Activated T-helper 1 cell treated with anti-CD3 and anti-CD28 coated beads, Interleukin-12 subunit alpha, Interleukin-12 subunit beta, Interleukin-2, Interleukin-4 antibody, amounts not matched to agents 30 ng/mL and 10 ng/mL and 1 ng/mL, durations not matched to agents 14 hours and 24 hours and 36 hours (primary cell): ENCODE measurements at regions of chr7 and their contacts with region 1.

Region 1: DNA sequence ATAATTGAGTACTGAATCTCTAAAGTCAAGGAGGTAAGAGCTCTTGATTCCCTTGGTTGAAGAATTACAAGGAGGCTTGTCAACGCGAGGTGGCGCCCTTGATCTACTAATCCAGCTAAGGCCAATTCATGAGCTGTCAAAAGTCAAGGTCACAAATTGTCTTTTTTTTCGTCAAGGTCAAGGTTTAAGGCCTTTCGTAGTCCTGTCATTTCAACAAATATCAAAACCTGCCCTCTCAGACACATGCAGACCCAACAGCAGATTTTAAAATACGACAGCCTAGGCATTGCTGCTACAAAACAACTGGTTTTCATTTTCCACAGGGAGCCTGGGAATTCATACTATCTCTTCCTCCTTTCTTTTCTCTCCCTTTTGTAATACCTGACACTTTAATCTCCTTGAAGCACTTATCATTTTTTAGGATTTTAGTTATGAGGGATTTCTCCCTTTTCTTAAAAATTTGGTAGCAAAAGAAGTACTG is 3.6 kb downstream of the HOXA13 start:
- DNase-seq: peak; percentile 59
- H3K4me3 Mint-ChIP-seq: no peak overlapping the region
- H3K27ac Mint-ChIP-seq: no peak overlapping the region
- H3K4me1 Mint-ChIP-seq: no peaks in the 10 kb centered on the region
- H3K27me3 Mint-ChIP-seq: peaks cover 80% of the 10 kb centered on the region

Region 2: GRCh38 chr7:27095897-27096767 is 100.2 kb before region 1 on chr7 and contains the start of gene HOXA1:
- intact Hi-C with region 1: loop called (anchors 5 kb)
- DNase-seq: peak; percentile 48
- H3K4me3 Mint-ChIP-seq: peak within 1 kb of the TSS; percentile 85
- H3K27ac Mint-ChIP-seq: peak within 1 kb of the TSS; percentile 73
- H3K4me1 Mint-ChIP-seq: peaks cover 18% of the 10 kb centered on the region
- H3K27me3 Mint-ChIP-seq: peaks cover 76% of the 10 kb centered on the region
- total RNA-seq, gene HOXA1: 0.16 and 0.24 TPM in 2 replicates

Region 3: DNA sequence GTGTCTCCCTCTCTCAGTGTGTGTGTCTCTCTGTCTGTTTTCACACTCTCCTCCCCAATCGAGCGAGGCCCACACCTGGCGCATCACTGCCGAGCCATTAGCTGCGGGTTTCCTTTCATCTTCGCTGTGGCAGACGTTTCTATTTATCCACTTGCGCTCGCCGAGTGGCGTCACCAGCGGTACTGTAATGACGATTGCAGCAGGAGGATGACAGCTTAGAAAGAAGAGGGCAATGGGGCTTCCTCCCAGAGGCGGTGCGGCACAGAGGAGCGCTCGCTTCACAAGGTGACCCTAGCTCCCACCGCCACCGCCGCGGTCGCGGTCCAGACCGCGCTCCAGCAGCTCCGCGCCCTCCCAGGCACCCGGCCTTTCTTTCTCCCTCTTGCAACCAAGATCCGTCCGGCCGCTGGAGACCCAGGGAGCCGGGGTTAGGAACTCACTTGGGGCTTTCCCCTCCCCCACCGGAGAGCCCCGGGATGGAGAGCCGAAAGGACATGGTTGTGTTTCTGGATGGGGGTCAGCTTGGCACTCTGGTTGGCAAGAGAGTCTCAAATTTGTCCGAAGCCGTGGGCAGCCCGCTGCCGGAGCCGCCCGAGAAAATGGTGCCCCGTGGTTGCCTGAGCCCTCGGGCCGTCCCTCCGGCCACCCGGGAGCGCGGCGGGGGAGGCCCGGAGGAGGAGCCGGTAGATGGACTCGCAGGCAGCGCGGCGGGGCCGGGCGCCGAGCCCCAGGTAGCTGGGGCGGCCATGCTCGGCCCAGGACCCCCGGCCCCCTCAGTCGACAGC is 46.4 kb after region 1 on chr7 and contains the start of gene EVX1:
- intact Hi-C with region 1: loop called (anchors 2 kb)
- DNase-seq: no peak
- H3K4me3 Mint-ChIP-seq: no peak within 1 kb of the TSS
- H3K27ac Mint-ChIP-seq: peak within 1 kb of the TSS; percentile 68
- H3K4me1 Mint-ChIP-seq: no peaks in the 10 kb centered on the region
- H3K27me3 Mint-ChIP-seq: peaks cover 83% of the 10 kb centered on the region
- total RNA-seq, gene EVX1: not detected in 2 replicates

Region 4: GRCh38 chr7:27423272-27423671 is 226.9 kb after region 1 on chr7:
- intact Hi-C with region 1: no loop called
- DNase-seq: no peak
- H3K4me3 Mint-ChIP-seq: no peak overlapping the region
- H3K27ac Mint-ChIP-seq: no peak overlapping the region
- H3K4me1 Mint-ChIP-seq: no peaks in the 10 kb centered on the region
- H3K27me3 Mint-ChIP-seq: peaks cover 4% of the 10 kb centered on the region

Region 5: DNA sequence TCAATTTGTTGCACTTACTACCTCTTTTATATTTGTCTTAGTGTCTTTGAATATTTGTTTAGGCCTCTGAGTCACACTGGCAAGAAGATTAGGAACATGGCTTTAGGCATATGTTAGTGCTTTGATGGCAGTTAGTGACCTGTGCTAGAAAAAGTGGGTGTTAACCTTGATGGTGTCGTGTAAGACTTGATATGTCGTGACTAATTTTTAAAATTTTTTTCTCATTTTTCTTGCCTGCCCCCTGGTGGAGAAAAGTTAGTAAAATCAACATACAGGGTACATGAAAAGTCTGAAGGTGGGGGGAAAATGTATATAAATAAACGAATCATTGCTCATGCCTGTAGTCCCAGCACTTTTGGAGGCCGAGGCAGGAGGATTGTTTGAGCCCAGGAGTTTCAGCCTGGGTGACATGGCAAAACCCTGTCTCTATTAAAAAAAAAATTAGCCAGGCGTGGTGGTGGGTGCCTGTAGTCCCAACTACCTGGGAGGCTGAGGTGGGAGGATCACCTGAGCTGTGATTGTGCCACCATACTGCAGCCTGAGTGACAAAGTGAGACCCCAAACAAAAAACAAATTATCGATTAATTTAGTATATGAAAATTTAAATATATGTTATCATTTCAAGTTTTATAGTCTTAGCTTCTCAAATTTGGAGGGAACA is 588.2 kb after region 1 on chr7:
- intact Hi-C with region 1: loop called (anchors 5 kb)
- DNase-seq: peak; percentile 2
- H3K4me3 Mint-ChIP-seq: no peak overlapping the region
- H3K27ac Mint-ChIP-seq: peak overlapping the region; percentile 20
- H3K4me1 Mint-ChIP-seq: peaks cover 24% of the 10 kb centered on the region
- H3K27me3 Mint-ChIP-seq: no peaks in the 10 kb centered on the region

Region 6: GRCh38 chr7:28078036-28078901 is 881.9 kb after region 1 on chr7:
- intact Hi-C with region 1: loop called (anchors 1 kb)
- DNase-seq: peak; percentile 12
- H3K4me3 Mint-ChIP-seq: no peak overlapping the region
- H3K27ac Mint-ChIP-seq: no peak overlapping the region
- H3K4me1 Mint-ChIP-seq: no peaks in the 10 kb centered on the region
- H3K27me3 Mint-ChIP-seq: peaks cover 11% of the 10 kb centered on the region

Region 7: GRCh38 chr7:28853834-28854749 is 1657.8 kb after region 1 on chr7:
- intact Hi-C with region 1: loop called (anchors 5 kb)
- DNase-seq: peak; percentile 49
- H3K4me3 Mint-ChIP-seq: peak overlapping the region; percentile 66
- H3K27ac Mint-ChIP-seq: no peak overlapping the region
- H3K4me1 Mint-ChIP-seq: peaks cover 7% of the 10 kb centered on the region
- H3K27me3 Mint-ChIP-seq: peaks cover 40% of the 10 kb centered on the region